Heart right ventricle (tissue), 16 donors: ENCODE measurements at regions of chrX and their contacts with region 1.

Region 1: DNA sequence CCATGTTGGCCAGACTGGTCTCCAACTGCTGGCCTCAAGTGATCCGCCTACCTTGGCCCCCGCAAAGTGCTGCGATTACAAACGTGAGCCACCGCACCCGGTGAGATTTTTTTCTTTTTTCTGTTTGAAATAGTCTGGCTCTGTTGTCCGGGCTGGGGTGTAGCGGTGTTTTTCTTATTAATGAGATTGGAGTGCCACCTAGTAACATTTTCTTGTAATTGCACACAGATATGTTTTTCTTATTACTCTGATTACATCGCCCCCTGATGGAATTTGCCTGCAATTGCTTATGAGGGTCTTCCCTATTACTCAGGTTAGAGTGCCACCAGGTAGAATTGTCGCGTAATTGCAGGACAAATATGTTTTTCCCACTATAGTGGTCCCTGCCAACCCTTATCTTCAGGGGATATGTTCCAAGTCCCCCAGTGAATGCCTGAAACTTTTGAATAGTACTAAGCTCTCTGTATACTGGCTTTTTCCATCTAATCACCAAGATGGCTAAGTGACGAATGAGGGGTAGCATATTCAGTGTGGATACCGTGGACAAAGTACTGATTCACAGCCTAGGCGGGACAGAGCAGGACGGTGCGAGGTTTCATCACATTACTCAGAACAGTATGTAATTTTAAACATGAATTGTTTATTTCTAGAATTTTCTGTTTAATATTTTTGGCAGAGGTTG is 8.6 kb upstream of the PDHA1 start:
- DNase-seq: no peak
- ATAC-seq: no peak
- H3K4me3 ChIP-seq: no peak overlapping the region
- H3K27ac ChIP-seq: no peak overlapping the region
- H3K4me1 ChIP-seq: peaks cover 0 to 9% (median 0%) of the 10 kb centered on the region in 9 donors
- H3K27me3 ChIP-seq: no peaks in the 10 kb centered on the region
- CTCF ChIP-seq: peak in 1 of 9 donors; percentile 29

Region 2: DNA sequence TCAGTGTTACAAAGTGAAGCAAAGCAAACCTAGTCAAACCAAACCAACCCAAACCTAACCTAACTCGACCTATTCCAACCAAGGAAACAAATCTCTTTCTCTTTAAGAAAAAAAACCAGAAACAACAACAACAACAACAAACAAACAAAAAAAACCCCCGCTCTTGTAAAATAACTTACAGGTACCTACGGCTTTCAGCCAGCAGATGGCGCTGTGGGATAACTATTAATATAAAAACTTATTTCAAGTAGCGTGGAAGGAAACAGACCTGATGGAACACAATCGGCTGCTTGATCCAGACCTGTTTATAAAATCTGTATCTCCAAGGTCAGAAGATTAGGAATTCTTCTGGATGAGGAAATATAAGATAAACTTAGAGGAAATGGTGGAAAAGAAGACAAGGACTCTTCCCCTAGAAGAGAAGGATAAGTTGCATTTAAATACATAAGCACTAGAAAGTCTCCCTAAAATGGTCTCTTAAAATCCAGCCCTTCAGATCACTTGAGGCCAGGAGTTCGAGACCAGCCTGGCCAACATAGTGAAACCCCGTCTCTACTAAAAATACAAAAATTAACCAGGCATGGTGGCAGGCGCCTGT is 944.0 kb before region 1 on chrX:
- intact Hi-C with region 1: loop called in 7 of 10 experiments (anchors 2 to 10 kb)
- DNase-seq: peak; percentile 26 to 36
- ATAC-seq: no peak
- H3K4me3 ChIP-seq: no peak overlapping the region
- H3K27ac ChIP-seq: no peak overlapping the region
- H3K4me1 ChIP-seq: no peaks in the 10 kb centered on the region
- H3K27me3 ChIP-seq: no peaks in the 10 kb centered on the region
- CTCF ChIP-seq: peak; percentile 47 to 81 (median 71)

Region 3: GRCh38 chrX:18931972-18932371 is 403.1 kb before region 1 on chrX:
- intact Hi-C with region 1: loop called in 5 of 10 experiments (anchors 2 to 10 kb)
- DNase-seq: peak in 1 of 2 donors; percentile 13
- ATAC-seq: peak in 7 of 8 donors; percentile 25 to 78 (median 39)
- H3K4me3 ChIP-seq: no peak overlapping the region
- H3K27ac ChIP-seq: no peak overlapping the region
- H3K4me1 ChIP-seq: no peaks in the 10 kb centered on the region
- H3K27me3 ChIP-seq: no peaks in the 10 kb centered on the region
- CTCF ChIP-seq: peak in 8 of 9 donors; percentile 9 to 55 (median 46)

Region 4: DNA sequence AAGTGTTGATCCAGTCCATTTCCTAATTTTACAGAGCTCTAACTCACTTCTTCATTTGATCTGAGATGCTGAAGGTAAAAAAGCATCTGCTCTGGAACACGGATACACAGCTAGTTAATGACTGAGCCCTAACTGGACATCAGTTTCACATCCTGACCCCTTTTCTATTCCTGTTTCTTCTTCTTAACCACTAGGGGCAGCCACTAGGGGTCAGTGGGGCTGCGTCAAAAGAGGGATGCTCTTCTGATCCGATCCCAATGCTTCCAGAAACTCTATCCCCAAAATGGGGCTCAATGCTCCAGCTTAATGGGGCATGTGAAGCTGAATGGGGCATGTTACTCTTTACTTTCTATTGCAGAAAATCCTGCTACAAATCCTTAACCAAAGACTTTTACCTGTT is 317.8 kb before region 1 on chrX:
- intact Hi-C with region 1: loop called in 5 of 10 experiments (anchors 5 to 10 kb)
- DNase-seq: peak in 1 of 2 donors; percentile 7
- ATAC-seq: no peak
- H3K4me3 ChIP-seq: no peak overlapping the region
- H3K27ac ChIP-seq: no peak overlapping the region
- H3K4me1 ChIP-seq: no peaks in the 10 kb centered on the region
- H3K27me3 ChIP-seq: no peaks in the 10 kb centered on the region
- CTCF ChIP-seq: peak in 7 of 9 donors; percentile 36 to 54 (median 46)

Region 5: GRCh38 chrX:19194285-19195242 is 140.5 kb before region 1 on chrX:
- intact Hi-C with region 1: no loop called
- DNase-seq: no peak
- ATAC-seq: no peak
- H3K4me3 ChIP-seq: no peak overlapping the region
- H3K27ac ChIP-seq: no peak overlapping the region
- H3K4me1 ChIP-seq: no peaks in the 10 kb centered on the region
- H3K27me3 ChIP-seq: peaks cover 0 to 7% (median 0%) of the 10 kb centered on the region in 7 donors
- CTCF ChIP-seq: no peak

Region 6: DNA sequence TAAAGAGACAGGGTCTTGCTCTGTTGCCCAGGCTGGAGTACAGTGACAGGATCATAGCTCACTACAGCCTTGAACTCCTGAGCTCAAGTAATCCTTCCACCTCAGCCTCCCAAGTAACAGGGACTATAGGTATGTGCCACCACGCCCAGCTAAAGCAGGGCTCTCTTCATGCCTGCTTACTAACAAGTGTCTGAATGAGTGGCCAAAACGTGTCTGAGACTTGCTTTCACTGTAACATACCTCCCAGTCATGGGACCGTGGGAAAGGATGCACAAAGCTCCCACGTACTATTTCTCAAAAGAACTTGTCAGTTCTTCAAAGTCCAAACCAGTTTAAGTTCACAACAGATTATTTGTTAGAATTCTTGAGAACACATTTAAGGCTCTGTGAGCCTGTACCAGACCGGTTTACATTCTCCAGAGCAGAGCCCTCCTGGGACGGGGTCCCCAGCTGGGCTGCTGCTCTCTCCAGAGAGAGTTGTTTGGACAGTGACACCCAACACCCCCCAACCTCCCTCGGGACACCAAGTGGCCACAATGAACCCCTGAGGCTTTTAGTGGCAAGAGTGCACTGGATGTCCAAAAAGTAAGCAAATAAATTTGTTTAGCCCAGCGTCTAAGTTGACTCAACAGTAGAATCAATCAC is 528.2 kb after region 1 on chrX:
- intact Hi-C with region 1: no loop called
- DNase-seq: peak in 1 of 2 donors; percentile 18
- ATAC-seq: peak in 3 of 8 donors; percentile 14 to 48 (median 32)
- H3K4me3 ChIP-seq: no peak overlapping the region
- H3K27ac ChIP-seq: peak overlapping the region in 5 of 10 donors; percentile 20 to 73 (median 34)
- H3K4me1 ChIP-seq: peaks cover 0 to 59% (median 9%) of the 10 kb centered on the region in 9 donors
- H3K27me3 ChIP-seq: peaks cover 0 to 7% (median 0%) of the 10 kb centered on the region in 7 donors
- CTCF ChIP-seq: no peak